Body of pancreas (tissue), 4 donors: ENCODE measurements at regions of chr9 and their contacts with region 1.

Region 1: GRCh38 chr9:38088006-38088925 is 19.2 kb upstream of the SHB start:
- DNase-seq: peak; percentile 75 to 86 (median 80)
- ATAC-seq: peak; percentile 91
- H3K4me3 ChIP-seq: no peak overlapping the region
- H3K27ac ChIP-seq: no peak overlapping the region
- H3K4me1 ChIP-seq: peaks cover 10% of the 10 kb centered on the region
- H3K27me3 ChIP-seq: no peaks in the 10 kb centered on the region
- CTCF ChIP-seq: peak; percentile 87 to 98 (median 94)
- POLR2A ChIP-seq: no peak

Region 2: DNA sequence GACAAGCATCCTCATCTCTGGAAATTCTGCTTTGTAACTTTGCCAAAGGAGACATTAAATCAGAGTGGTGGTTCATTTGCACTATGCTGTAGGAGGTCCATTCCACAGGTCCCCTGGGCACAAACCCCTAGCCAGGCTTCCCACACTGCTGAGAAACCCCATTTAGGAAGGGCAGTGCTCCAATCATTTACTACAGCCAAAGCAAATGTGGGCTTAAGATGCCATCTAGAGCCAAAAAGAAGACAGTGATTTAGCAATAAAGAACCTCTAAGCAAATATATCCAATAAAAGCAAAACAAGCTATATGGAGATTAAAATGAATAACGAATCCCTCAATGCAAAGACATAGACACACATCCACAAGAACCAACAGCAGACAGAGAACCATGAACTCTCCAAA is 175.3 kb after region 1 on chr9:
- intact Hi-C with region 1: no loop called
- DNase-seq: no peak
- ATAC-seq: no peak
- H3K4me3 ChIP-seq: no peak overlapping the region
- H3K27ac ChIP-seq: no peak overlapping the region
- H3K4me1 ChIP-seq: no peaks in the 10 kb centered on the region
- H3K27me3 ChIP-seq: no peaks in the 10 kb centered on the region
- CTCF ChIP-seq: peak in 3 of 7 experiments; percentile 22 to 32 (median 25)
- POLR2A ChIP-seq: no peak

Region 3: GRCh38 chr9:38362852-38363593 is 274.8 kb after region 1 on chr9:
- intact Hi-C with region 1: loop called (anchors 10 kb)
- DNase-seq: peak; percentile 56 to 78 (median 74)
- ATAC-seq: peak; percentile 94
- H3K4me3 ChIP-seq: no peak overlapping the region
- H3K27ac ChIP-seq: no peak overlapping the region
- H3K4me1 ChIP-seq: peaks cover 5% of the 10 kb centered on the region
- H3K27me3 ChIP-seq: no peaks in the 10 kb centered on the region
- CTCF ChIP-seq: peak; percentile 34 to 93 (median 78)
- POLR2A ChIP-seq: no peak

Region 4: GRCh38 chr9:38417003-38417945 is 329.0 kb after region 1 on chr9:
- intact Hi-C with region 1: no loop called
- DNase-seq: peak in 1 of 4 donors; percentile 43
- ATAC-seq: no peak
- H3K4me3 ChIP-seq: no peak overlapping the region
- H3K27ac ChIP-seq: no peak overlapping the region
- H3K4me1 ChIP-seq: no peaks in the 10 kb centered on the region
- H3K27me3 ChIP-seq: no peaks in the 10 kb centered on the region
- CTCF ChIP-seq: peak in 5 of 7 experiments; percentile 14 to 32 (median 27)
- POLR2A ChIP-seq: no peak